Naive thymus-derived CD4-positive, alpha-beta T cell (primary cell): ENCODE measurements at regions of chr12 and their contacts with region 1.

Region 1: GRCh38 chr12:106753526-106753925 is 21.0 kb upstream of the RIC8B start:
- DNase-seq: peak in 7 of 9 donors; percentile 31 to 57 (median 43)
- ATAC-seq: peak; percentile 85
- H3K4me3 ChIP-seq: peak overlapping the region; percentile 7
- H3K4me3 Mint-ChIP-seq: peak overlapping the region; percentile 35 to 75 (median 54)
- H3K27ac ChIP-seq: no peak overlapping the region
- H3K27ac Mint-ChIP-seq: peak overlapping the region; percentile 53 to 89 (median 68)
- H3K4me1 ChIP-seq: peaks cover 23 to 27% of the 10 kb centered on the region in 2 donors
- H3K4me1 Mint-ChIP-seq: peaks cover 19 to 39% (median 24%) of the 10 kb centered on the region in 7 donors
- H3K27me3 ChIP-seq: no peaks in the 10 kb centered on the region
- H3K27me3 Mint-ChIP-seq: no peaks in the 10 kb centered on the region

Region 2: DNA sequence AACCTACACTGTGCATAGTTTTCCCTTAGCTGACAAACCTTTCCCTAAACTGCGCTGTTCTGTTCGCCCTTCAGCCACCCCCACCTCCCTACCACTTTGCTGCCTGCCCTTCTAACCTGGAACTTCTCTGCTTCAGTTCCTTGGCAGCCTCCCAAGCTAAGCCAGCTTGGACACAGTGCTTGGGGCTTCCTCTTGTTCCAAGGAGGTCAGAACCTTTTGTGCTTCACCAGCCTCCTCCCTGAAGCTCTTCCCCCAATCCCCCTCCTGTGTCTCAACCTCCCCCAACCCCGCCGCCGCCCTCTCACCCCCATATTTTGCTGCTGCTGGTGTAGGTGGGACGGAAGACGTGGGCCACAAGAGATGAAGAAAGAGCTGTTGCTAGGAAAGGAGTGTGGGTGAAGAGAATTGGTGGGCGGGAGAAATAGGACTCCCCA is 12.9 kb after region 1 on chr12:
- CTCF ChIA-PET with region 1: interaction called, 3 read pairs
- POLR2A ChIA-PET with region 1: interaction called, 13 read pairs
- intact Hi-C with region 1: no loop called
- DNase-seq: no peak
- ATAC-seq: no peak
- H3K4me3 ChIP-seq: no peak overlapping the region
- H3K4me3 Mint-ChIP-seq: peak overlapping the region in 7 of 10 donors; percentile 2 to 38 (median 29)
- H3K27ac ChIP-seq: no peak overlapping the region
- H3K27ac Mint-ChIP-seq: peak overlapping the region in 5 of 9 donors; percentile 9 to 66 (median 22)
- H3K4me1 ChIP-seq: peaks cover 0 to 4% of the 10 kb centered on the region in 2 donors
- H3K4me1 Mint-ChIP-seq: peaks cover 6 to 35% (median 18%) of the 10 kb centered on the region in 7 donors
- H3K27me3 ChIP-seq: no peaks in the 10 kb centered on the region
- H3K27me3 Mint-ChIP-seq: peaks cover 0 to 22% (median 0%) of the 10 kb centered on the region in 5 donors